ENCODE measurements at regions of chr6 and their contacts with region 1.

Region 1: DNA sequence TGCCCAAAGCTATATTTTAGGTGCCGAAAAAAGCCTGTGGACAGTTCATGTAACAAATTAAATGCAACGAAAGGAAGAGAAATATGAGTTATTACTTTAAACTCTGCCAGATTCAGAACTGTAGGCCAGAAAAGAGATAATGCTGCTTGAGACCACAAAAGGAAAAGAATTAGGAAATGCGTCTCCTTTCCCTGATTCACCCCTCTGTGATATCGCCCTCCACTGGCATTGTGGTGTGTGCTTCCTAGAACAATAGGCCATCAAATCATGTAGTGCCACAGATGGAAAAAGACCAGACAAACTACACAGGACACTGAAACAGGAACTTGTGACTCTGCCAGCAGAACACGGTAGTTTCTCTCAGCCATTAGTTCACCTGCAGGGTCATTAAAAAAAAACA is 14.7 kb upstream of the LAMA4 start:
- DNase-seq: peak; percentile 81
- H3K4me3 ChIP-seq: no peak overlapping the region
- H3K27ac ChIP-seq: no peak overlapping the region
- H3K4me1 ChIP-seq: peaks cover 19% of the 10 kb centered on the region
- H3K27me3 ChIP-seq: peaks cover 0 to 2% of the 10 kb centered on the region in 2 experiments
- CTCF ChIP-seq: peak; percentile 41 to 48
- POLR2A ChIP-seq: no peak

Region 2: DNA sequence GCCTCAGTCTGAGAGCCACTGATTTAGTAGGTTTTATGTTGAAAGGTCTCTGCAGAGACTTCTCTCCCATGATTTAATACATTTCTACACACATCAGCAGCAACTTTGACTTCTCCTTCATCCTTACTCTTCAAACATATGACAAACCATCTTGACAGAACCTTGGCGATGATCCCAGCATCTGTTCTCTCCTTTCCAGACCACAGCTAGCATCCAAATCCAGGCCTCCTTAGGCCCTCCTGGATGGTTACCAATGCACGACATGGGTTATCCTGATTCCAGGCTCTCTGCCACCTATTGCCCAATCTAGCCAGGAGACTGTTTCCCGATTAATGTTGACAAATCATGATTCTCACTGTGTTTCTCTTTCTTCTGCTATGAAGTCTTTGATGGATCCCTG is 31.5 kb before region 1 on chr6:
- CTCF ChIA-PET with region 1: interaction called, 16 read pairs
- POLR2A ChIA-PET with region 1: interaction called, 6 read pairs
- dilution Hi-C with region 1: no loop called
- intact Hi-C with region 1: loop called (anchors 2 kb)
- DNase-seq: peak; percentile 53
- H3K4me3 ChIP-seq: no peak overlapping the region
- H3K27ac ChIP-seq: peak overlapping the region; percentile 99
- H3K4me1 ChIP-seq: peaks cover 86% of the 10 kb centered on the region
- H3K27me3 ChIP-seq: no peaks in the 10 kb centered on the region
- CTCF ChIP-seq: no peak
- POLR2A ChIP-seq: no peak

Region 3: GRCh38 chr6:112282221-112282620 is 13.1 kb after region 1 on chr6:
- CTCF ChIA-PET with region 1: interaction called, 15 read pairs
- POLR2A ChIA-PET with region 1: no interaction called
- dilution Hi-C with region 1: no loop called
- intact Hi-C with region 1: no loop called
- DNase-seq: peak; percentile 72
- H3K4me3 ChIP-seq: no peak overlapping the region
- H3K27ac ChIP-seq: no peak overlapping the region
- H3K4me1 ChIP-seq: peaks cover 17% of the 10 kb centered on the region
- H3K27me3 ChIP-seq: no peaks in the 10 kb centered on the region
- CTCF ChIP-seq: peak; percentile 19 to 33
- POLR2A ChIP-seq: no peak

Region 4: GRCh38 chr6:112289038-112289566 is 20.0 kb after region 1 on chr6:
- CTCF ChIA-PET with region 1: interaction called, 11 read pairs
- POLR2A ChIA-PET with region 1: no interaction called
- dilution Hi-C with region 1: no loop called
- intact Hi-C with region 1: no loop called
- DNase-seq: no peak
- H3K4me3 ChIP-seq: no peak overlapping the region
- H3K27ac ChIP-seq: no peak overlapping the region
- H3K4me1 ChIP-seq: no peaks in the 10 kb centered on the region
- H3K27me3 ChIP-seq: no peaks in the 10 kb centered on the region
- CTCF ChIP-seq: no peak
- POLR2A ChIP-seq: no peak

Region 5: GRCh38 chr6:112296122-112296521 is 27.0 kb after region 1 on chr6:
- CTCF ChIA-PET with region 1: interaction called, 11 read pairs
- POLR2A ChIA-PET with region 1: no interaction called
- dilution Hi-C with region 1: no loop called
- intact Hi-C with region 1: loop called (anchors 1 kb)
- DNase-seq: peak; percentile 62
- H3K4me3 ChIP-seq: no peak overlapping the region
- H3K27ac ChIP-seq: no peak overlapping the region
- H3K4me1 ChIP-seq: peaks cover 15% of the 10 kb centered on the region
- H3K27me3 ChIP-seq: no peaks in the 10 kb centered on the region
- CTCF ChIP-seq: peak; percentile 60 to 64
- POLR2A ChIP-seq: no peak

Region 6: DNA sequence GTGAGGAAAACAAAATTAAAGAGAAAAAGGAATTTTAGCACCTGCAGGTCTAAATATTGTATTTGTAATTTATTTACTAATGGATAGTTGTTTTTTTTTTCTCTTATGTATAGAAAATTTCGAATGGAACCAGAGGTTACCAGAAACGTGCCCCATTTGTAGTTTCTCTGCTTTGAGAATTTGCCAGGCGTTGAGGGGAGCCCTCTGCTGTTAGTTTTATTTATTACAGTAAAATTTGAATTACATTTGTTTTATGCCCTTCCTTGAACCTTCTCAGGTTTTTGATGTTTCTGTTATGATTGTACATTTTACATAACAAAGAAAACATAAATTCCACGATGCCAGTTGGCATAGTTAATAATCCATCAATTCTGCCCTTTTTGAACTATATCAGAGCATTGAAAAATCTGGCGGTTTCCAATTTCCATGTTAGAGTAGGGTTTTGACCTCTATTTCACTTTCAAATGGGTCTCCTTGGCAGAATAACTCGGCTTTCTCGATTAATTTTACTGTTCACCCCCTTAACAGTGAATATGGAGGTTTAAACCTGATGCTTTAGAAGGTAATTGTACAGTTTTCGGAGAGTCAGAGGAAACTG is 42.9 kb after region 1 on chr6:
- CTCF ChIA-PET with region 1: interaction called, 19 read pairs
- POLR2A ChIA-PET with region 1: no interaction called
- dilution Hi-C with region 1: no loop called
- intact Hi-C with region 1: loop called (anchors 5 kb)
- DNase-seq: peak; percentile 51
- H3K4me3 ChIP-seq: no peak overlapping the region
- H3K27ac ChIP-seq: no peak overlapping the region
- H3K4me1 ChIP-seq: no peaks in the 10 kb centered on the region
- H3K27me3 ChIP-seq: no peaks in the 10 kb centered on the region
- CTCF ChIP-seq: peak; percentile 37 to 43
- POLR2A ChIP-seq: no peak

Measured in endothelial cell of umbilical vein (primary cell).